Ovary (tissue), 10 donors: ENCODE measurements at regions of chr9 and their contacts with region 1.

Region 1: DNA sequence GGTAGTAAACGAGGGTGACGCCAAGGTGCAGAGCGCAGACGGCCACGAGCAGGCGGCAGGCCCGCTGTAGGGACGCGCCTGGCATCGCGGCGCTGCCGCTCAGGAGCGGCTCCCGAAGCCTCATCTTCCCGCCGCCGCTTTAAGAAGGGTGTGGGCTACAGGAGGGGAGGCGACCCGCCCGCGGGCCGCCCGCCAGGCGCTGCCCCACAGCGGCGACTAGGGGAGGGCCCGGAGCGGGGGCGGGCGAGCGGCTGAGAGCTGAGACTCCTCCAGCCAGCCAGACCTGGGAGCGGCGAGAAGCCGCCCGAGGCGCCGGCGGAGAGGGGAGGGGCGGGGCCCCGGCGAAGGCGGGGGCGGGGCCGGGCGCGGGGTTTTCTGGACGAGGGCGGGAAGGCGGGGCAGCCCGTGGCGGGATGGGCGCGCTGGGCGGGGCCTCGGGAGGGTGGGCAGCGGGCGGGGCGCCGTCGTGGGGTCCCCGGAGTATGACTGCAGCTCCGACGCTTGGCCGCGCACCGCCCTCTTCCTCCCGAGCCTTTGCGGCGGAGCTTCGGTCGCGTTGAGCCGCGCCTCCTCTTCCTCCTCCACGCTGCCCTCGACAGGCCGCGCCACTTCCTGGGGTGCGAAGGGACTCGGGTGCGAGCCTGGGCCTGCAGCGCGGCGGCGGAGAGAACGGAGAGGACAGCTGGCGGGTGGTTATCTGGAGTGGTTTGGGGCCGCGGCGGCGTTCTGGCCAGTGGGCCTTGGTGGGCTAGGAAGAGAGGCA is at the start of gene B4GALT1:
- DNase-seq: peak; percentile 95 to 99 (median 98)
- H3K4me3 ChIP-seq: peak within 1 kb of the TSS; percentile 76
- H3K27ac ChIP-seq: peak within 1 kb of the TSS; percentile 79 to 95
- H3K4me1 ChIP-seq: peaks cover 21% of the 10 kb centered on the region
- H3K27me3 ChIP-seq: no peaks in the 10 kb centered on the region
- CTCF ChIP-seq: peak in 1 of 3 donors; percentile 23
- EP300 ChIP-seq: no peak
- POLR2A ChIP-seq: peak; percentile 91
- total RNA-seq, gene B4GALT1: 77.9 to 226 (median 88.3) TPM

Region 2: GRCh38 chr9:33211695-33212393 is 44.6 kb after region 1 on chr9:
- intact Hi-C with region 1: loop called in 1 of 4 experiments (anchors 10 kb)
- DNase-seq: peak in 2 of 5 donors; percentile 19 to 53
- H3K4me3 ChIP-seq: no peak overlapping the region
- H3K27ac ChIP-seq: no peak overlapping the region
- H3K4me1 ChIP-seq: no peaks in the 10 kb centered on the region
- H3K27me3 ChIP-seq: no peaks in the 10 kb centered on the region
- CTCF ChIP-seq: no peak
- EP300 ChIP-seq: no peak
- POLR2A ChIP-seq: no peak

Region 3: GRCh38 chr9:33272061-33272460 is 104.8 kb after region 1 on chr9:
- intact Hi-C with region 1: no loop called
- DNase-seq: no peak
- H3K4me3 ChIP-seq: no peak overlapping the region
- H3K27ac ChIP-seq: no peak overlapping the region
- H3K4me1 ChIP-seq: no peaks in the 10 kb centered on the region
- H3K27me3 ChIP-seq: no peaks in the 10 kb centered on the region
- CTCF ChIP-seq: no peak
- EP300 ChIP-seq: no peak
- POLR2A ChIP-seq: no peak

Region 4: DNA sequence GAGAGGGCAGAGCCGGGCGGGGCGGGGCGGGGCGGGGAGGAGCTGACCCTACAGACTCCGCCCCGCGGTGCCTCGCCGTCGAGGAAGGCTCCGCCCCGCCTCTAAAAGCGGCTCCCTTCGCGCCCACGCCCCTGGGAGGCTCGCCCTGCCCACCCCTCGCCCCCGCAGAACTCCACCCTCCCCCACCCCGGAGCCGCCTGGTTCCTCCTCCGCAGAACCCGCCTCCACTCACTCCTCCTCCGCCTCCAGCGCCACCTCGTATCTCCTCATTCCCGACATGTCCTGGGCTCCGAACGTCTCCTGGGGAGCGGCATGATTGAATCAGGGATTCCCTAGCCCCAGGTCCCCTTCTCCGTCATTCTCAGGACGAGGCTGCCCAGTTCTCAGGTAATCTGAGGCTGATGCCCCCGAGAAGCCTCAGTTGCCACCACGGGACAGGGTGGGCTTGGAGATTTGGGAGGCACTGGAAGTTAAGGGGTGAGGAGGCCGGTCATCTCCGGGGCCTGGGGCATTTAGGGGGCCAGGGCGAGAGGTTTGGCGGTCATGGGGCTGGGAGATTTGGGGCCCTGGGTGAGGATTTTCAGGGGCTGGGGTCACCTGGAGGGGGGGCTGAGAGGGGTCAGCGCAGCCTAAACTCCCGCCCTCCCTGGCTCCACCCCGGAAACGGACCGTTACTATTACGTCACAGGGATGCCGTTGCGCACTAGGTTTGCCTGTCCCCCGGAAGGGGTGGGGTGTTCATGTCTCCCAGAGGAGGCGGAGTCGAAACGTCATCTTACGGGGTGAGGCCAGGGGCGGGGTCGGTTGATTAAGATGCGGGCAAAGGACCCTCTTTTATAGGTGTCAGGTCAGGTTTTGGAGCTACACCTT is 1498.4 kb after region 1 on chr9:
- intact Hi-C with region 1: loop called in 1 of 4 experiments (anchors 10 kb)
- DNase-seq: peak; percentile 96 to 98 (median 98)
- H3K4me3 ChIP-seq: peak overlapping the region; percentile 81
- H3K27ac ChIP-seq: peak overlapping the region; percentile 94 to 98
- H3K4me1 ChIP-seq: peaks cover 4% of the 10 kb centered on the region
- H3K27me3 ChIP-seq: no peaks in the 10 kb centered on the region
- CTCF ChIP-seq: peak in 1 of 3 donors; percentile 45
- EP300 ChIP-seq: peak; percentile 40
- POLR2A ChIP-seq: peak; percentile 95